GM10248 (cell line): ENCODE measurements at regions of chr19 and their contacts with region 1.

Region 1: GRCh38 chr19:7326105-7326877 is 22.4 kb upstream of the ARHGEF18 start:
- DNase-seq: peak; percentile 45
- CTCF ChIP-seq: peak; percentile 36

Region 2: DNA sequence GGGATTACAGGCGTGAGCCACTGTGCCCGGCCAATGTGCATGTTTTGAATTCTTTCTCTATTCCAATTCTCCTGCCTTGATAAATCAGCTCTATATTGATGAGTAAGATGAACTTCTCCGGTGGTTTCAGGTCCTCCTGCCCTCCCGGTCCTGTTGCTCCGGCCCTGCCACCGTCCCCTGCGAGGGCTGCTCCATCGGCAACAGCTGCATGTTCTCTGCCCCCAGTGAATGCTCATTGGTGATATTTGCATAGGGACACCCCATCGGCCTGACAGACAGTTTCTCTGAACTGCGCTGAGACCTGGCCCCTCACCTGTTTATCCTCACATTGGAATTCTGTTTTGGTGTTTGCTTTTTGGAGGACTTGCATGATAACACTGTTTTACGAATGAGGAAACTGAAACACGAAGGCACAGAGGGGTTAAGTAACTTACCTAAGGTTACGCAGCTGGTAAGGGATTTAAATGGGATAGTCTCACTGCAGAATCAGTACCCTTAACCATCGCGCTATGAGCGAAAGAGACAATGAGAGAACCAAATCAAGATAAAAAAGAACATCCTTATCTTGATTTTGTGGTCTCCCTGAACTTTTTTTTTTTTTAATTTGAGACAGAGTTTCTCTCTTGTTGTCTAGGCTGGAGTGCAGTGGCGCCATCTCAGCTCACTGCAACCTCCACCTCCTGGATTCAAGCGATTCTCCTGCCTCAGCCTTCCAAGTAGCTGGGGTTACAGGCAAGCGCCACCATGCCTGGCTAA is 224.6 kb before region 1 on chr19:
- CTCF ChIA-PET with region 1: interaction called, 19 read pairs
- POLR2A ChIA-PET with region 1: no interaction called
- DNase-seq: no peak
- CTCF ChIP-seq: no peak

Region 3: DNA sequence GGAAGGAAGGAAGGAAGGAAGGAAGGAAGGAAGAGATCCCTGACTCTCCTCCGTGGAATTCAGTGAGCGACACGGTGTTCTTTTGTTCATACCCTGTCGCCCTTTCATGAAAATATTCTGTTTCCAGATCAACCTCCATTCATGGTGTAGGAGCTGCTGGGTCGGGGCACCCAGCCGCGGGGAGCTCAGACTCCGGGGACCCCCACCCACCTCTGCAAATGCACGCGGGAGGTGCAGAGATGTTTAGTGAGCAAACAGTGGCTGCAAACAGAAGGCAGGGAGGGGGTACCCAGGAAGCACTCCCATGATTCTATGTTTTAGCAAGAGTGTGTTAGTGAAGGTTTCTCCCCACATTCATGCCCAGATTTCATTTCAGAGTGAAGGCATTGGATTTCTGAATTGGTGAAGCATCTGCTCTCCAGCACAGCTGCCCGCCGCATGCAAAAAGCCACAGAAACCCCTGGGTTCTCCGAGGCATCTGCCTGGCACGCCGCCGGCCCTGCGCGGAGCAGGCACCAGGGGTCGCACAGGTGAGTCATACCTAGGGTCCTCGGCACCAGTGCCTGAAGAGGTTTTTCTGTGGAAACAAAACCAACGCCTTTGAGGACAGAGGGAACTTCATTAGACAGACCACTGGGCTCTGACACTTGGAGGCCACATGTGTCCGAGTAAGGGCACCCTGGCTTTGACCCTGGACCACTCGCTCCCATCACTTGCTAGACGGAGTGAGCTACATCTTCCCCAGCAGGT is 176.2 kb before region 1 on chr19:
- CTCF ChIA-PET with region 1: interaction called, 14 read pairs
- POLR2A ChIA-PET with region 1: no interaction called
- DNase-seq: no peak
- CTCF ChIP-seq: no peak

Region 4: DNA sequence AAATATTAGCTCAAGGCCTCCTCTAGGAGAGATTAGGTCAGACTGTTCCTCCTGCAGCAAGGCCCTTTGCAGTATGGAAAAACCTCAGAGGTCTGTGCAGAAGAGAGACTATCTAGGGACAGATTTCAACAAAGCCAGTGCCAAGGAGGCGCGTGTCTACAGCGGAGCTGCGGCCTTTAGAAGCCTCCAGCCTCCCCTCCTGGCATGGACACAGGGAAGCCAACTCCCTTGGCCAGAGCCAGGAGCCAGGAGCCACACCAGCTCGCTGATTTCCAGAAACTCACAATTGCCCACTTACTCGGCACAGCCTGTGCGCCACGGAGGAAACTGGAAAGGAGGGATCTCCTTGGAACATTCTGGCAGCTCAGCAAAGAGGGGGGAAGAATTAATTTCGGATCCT is 95.5 kb before region 1 on chr19:
- CTCF ChIA-PET with region 1: no interaction called
- POLR2A ChIA-PET with region 1: no interaction called
- DNase-seq: no peak
- CTCF ChIP-seq: no peak

Region 5: GRCh38 chr19:7304200-7304599 is 22.1 kb before region 1 on chr19:
- CTCF ChIA-PET with region 1: interaction called, 13 read pairs
- POLR2A ChIA-PET with region 1: no interaction called
- DNase-seq: no peak
- CTCF ChIP-seq: no peak

Region 6: DNA sequence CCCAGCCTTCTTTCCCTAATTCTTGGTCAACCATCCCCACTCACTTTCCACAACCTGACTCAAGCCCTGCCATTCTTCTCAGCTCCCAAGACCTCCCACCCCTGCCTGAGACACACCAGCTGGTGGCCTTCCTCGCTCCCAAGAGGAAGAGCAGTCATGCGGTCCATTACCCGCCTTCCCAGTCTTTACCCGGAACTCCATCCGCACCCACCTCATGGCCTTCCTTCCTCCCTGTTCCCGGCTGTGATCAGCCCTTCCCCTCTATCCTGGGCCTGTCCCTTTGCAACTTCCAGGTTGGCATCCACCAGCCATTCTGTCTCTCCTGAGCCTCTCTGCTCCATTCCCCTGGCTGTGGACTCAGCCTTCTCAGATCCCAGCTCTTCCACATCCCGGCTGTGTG is 13.5 kb before region 1 on chr19:
- CTCF ChIA-PET with region 1: interaction called, 13 read pairs
- POLR2A ChIA-PET with region 1: no interaction called
- DNase-seq: no peak
- CTCF ChIP-seq: no peak